ENCODE measurements at regions of chr14 and their contacts with region 1.

Region 1: GRCh38 chr14:32252030-32252670 is 49.1 kb upstream of the RNU6-8 start:
- DNase-seq: peak; percentile 36
- ATAC-seq: peak; percentile 93
- H3K4me3 ChIP-seq: no peak overlapping the region
- H3K27ac ChIP-seq: no peak overlapping the region
- H3K4me1 ChIP-seq: no peaks in the 10 kb centered on the region
- H3K27me3 ChIP-seq: no peaks in the 10 kb centered on the region
- CTCF ChIP-seq: peak; percentile 74 to 88 (median 86)
- EP300 ChIP-seq: no peak
- POLR2A ChIP-seq: no peak
- RAD21 ChIP-seq: peak; percentile 97

Region 2: GRCh38 chr14:31926123-31926522 is 326.0 kb before region 1 on chr14:
- CTCF ChIA-PET with region 1: interaction called, 175 read pairs
- POLR2A ChIA-PET with region 1: no interaction called
- RAD21 ChIA-PET with region 1: interaction called, 33 read pairs
- SMC1A ChIA-PET with region 1: interaction called, 74 read pairs
- in situ Hi-C with region 1: loop called (anchors 5 kb)
- intact Hi-C with region 1: loop called (anchors 1 kb)
- DNase-seq: no peak
- ATAC-seq: peak; percentile 83
- H3K4me3 ChIP-seq: no peak overlapping the region
- H3K27ac ChIP-seq: no peak overlapping the region
- H3K4me1 ChIP-seq: no peaks in the 10 kb centered on the region
- H3K27me3 ChIP-seq: no peaks in the 10 kb centered on the region
- CTCF ChIP-seq: peak; percentile 61 to 65 (median 64)
- EP300 ChIP-seq: no peak
- POLR2A ChIP-seq: no peak
- RAD21 ChIP-seq: peak; percentile 63

Region 3: DNA sequence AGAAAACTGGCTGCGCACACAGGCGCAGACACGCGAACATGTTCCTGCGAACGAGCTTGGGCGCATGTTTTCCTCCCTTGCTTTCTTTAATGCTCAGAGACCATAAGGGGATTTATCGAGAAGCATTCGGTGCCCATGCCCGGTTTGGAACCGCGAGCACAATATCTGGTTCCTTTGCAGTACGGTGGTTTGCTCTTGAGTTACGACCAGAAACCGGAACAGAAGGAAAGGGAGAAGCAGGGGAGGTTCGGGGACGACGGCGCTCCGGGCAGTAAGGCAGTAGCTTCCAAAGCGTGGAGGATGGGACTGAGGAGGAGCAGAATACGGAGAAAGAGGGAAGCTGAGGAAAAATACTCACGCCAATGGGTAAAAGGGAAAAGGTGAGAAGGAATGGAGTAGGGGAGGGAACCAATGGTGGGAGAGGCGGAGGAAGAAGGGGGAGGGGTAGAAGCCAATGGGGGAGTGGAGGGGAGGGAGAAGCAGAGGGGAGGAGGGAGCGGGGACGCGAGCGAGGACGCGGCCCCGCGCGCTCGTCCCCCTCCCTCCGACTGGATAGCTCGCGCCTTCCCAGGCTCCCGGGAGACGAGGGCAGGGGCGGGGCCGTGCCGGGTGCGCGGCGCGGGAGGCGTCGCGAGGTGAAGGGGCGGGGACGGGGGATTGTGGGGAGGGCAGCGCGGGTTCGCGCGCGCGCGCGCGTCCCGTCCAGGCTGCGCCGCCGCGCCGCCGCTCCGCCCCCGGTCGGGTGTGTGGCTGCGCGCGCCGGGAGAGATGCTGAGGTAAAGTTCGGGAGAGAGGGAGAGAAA is 175.7 kb before region 1 on chr14:
- CTCF ChIA-PET with region 1: interaction called, 300 read pairs
- POLR2A ChIA-PET with region 1: no interaction called
- RAD21 ChIA-PET with region 1: interaction called, 99 read pairs
- SMC1A ChIA-PET with region 1: interaction called, 154 read pairs
- in situ Hi-C with region 1: loop called (anchors 5 kb)
- intact Hi-C with region 1: loop called (anchors 1 kb)
- DNase-seq: peak; percentile 28
- ATAC-seq: peak; percentile 65
- H3K4me3 ChIP-seq: peak overlapping the region; percentile 95
- H3K27ac ChIP-seq: no peak overlapping the region
- H3K4me1 ChIP-seq: no peaks in the 10 kb centered on the region
- H3K27me3 ChIP-seq: no peaks in the 10 kb centered on the region
- CTCF ChIP-seq: no peak
- EP300 ChIP-seq: no peak
- POLR2A ChIP-seq: no peak
- RAD21 ChIP-seq: no peak

Region 4: DNA sequence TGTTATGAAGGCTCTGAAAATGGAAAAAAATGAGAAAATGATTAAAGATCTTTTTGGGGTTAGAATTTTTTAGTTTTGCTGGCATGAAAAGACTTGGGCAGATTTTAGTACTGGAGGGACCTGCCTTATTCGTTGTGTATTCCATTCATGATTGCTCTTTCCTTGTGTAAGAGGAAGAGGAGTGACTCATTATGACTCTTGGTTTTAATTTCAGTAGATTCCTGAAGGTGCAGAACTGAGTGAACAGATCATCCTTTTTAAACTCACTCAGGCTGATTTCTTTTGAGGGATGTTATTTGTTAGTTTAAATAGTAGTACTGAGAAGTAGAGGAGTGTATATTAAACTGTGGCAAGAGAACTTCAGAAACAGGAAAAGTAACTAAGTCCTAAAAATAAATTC is 118.6 kb after region 1 on chr14:
- CTCF ChIA-PET with region 1: interaction called, 5 read pairs
- POLR2A ChIA-PET with region 1: no interaction called
- RAD21 ChIA-PET with region 1: interaction called, 3 read pairs
- SMC1A ChIA-PET with region 1: interaction called, 5 read pairs
- in situ Hi-C with region 1: no loop called
- intact Hi-C with region 1: loop called (anchors 5 kb)
- DNase-seq: no peak
- ATAC-seq: no peak
- H3K4me3 ChIP-seq: no peak overlapping the region
- H3K27ac ChIP-seq: no peak overlapping the region
- H3K4me1 ChIP-seq: no peaks in the 10 kb centered on the region
- H3K27me3 ChIP-seq: no peaks in the 10 kb centered on the region
- CTCF ChIP-seq: no peak
- EP300 ChIP-seq: no peak
- POLR2A ChIP-seq: no peak
- RAD21 ChIP-seq: no peak

Region 5: GRCh38 chr14:32469388-32470160 is 217.4 kb after region 1 on chr14:
- CTCF ChIA-PET with region 1: interaction called, 23 read pairs
- POLR2A ChIA-PET with region 1: no interaction called
- RAD21 ChIA-PET with region 1: interaction called, 16 read pairs
- SMC1A ChIA-PET with region 1: interaction called, 13 read pairs
- in situ Hi-C with region 1: loop called (anchors 5 kb)
- intact Hi-C with region 1: loop called (anchors 2 kb)
- DNase-seq: no peak
- ATAC-seq: peak; percentile 51
- H3K4me3 ChIP-seq: no peak overlapping the region
- H3K27ac ChIP-seq: no peak overlapping the region
- H3K4me1 ChIP-seq: no peaks in the 10 kb centered on the region
- H3K27me3 ChIP-seq: no peaks in the 10 kb centered on the region
- CTCF ChIP-seq: peak; percentile 29 to 56 (median 31); a peak in 3 of 6 replicates
- EP300 ChIP-seq: no peak
- POLR2A ChIP-seq: no peak
- RAD21 ChIP-seq: peak; percentile 68

Region 6: DNA sequence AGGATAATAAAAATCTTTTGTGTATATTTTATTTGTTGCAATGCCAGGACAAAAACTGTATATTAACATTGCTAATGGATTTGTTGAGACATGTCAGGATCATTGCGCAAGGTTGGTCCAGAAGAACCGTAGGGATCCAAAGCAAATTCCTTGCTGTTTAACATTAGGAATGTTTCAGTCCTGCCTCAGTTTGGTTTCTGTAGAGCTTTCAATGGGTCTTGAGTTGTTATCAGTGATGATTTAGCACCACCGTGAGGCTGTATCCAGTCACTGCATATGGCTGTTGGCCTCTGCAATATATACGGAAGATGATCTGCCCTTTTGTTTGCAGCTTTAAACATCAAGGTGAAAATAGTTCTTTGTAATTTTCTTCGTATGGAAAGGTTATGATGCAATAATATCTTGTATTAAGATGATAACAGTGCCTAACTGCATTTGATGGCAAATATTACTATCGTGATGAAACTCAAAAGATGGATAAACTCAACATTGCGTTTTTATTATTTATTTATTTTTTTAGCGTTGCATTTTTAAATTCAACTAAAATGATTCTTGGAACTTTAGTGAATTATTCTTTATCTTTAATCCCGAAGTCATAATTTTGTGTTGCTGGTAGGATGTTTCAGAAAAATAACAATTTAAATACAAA is 308.2 kb after region 1 on chr14:
- CTCF ChIA-PET with region 1: interaction called, 20 read pairs
- POLR2A ChIA-PET with region 1: no interaction called
- RAD21 ChIA-PET with region 1: interaction called, 5 read pairs
- SMC1A ChIA-PET with region 1: interaction called, 8 read pairs
- in situ Hi-C with region 1: no loop called
- intact Hi-C with region 1: loop called (anchors 2 kb)
- DNase-seq: no peak
- ATAC-seq: peak; percentile 85
- H3K4me3 ChIP-seq: no peak overlapping the region
- H3K27ac ChIP-seq: no peak overlapping the region
- H3K4me1 ChIP-seq: no peaks in the 10 kb centered on the region
- H3K27me3 ChIP-seq: no peaks in the 10 kb centered on the region
- CTCF ChIP-seq: peak; percentile 82 to 90 (median 87)
- EP300 ChIP-seq: no peak
- POLR2A ChIP-seq: no peak
- RAD21 ChIP-seq: peak; percentile 88

Region 7: GRCh38 chr14:32925439-32925838 is 673.3 kb after region 1 on chr14:
- CTCF ChIA-PET with region 1: no interaction called
- POLR2A ChIA-PET with region 1: no interaction called
- RAD21 ChIA-PET with region 1: no interaction called
- SMC1A ChIA-PET with region 1: no interaction called
- in situ Hi-C with region 1: no loop called
- intact Hi-C with region 1: no loop called
- DNase-seq: no peak
- ATAC-seq: no peak
- H3K4me3 ChIP-seq: no peak overlapping the region
- H3K27ac ChIP-seq: no peak overlapping the region
- H3K4me1 ChIP-seq: no peaks in the 10 kb centered on the region
- H3K27me3 ChIP-seq: no peaks in the 10 kb centered on the region
- CTCF ChIP-seq: no peak
- EP300 ChIP-seq: no peak
- POLR2A ChIP-seq: no peak
- RAD21 ChIP-seq: no peak